Endothelial cell of umbilical vein (primary cell): ENCODE measurements at regions of chr10 and their contacts with region 1.

Region 1: DNA sequence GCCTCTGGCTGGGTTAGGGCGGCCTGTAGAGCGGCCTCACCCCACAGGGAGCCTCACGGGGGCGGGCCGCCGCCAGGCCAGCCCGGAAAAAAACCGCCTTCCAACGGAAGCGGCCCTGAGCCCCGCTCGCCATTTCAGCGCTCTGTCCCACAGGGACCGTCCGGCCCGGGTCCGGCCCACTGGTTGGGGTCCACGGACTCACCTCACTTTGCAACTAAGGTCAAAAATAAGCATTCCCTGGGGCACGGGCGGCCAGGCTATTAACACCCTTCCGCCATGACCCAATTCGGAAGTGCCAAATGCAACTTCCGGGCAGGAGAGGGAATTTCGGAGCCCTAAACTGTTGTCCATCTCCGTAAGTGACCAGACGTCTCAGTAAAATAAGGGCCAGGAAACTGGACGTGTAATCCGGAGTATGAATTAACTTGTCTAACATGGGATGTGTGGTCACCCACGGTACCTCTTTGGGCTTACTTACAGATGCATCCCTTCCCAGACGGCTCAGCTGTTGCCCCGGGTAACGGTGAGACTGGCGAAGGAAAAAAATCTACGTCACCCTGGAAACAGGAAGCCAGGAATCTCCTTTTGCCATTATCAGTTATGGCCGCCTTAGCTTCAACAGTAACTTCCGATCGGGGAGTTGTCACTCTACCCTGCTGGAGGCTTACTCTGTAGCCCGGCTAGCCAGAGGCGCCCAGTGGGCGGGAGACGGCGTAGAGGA is at the start of gene BBIP1:
- DNase-seq: peak; percentile 100
- H3K4me3 ChIP-seq: peak within 1 kb of the TSS; percentile 89 to 94 (median 93)
- H3K27ac ChIP-seq: peak within 1 kb of the TSS; percentile 98
- H3K4me1 ChIP-seq: peaks cover 20% of the 10 kb centered on the region
- H3K27me3 ChIP-seq: no peaks in the 10 kb centered on the region
- CTCF ChIP-seq: no peak
- POLR2A ChIP-seq: peak; percentile 91
- total RNA-seq, gene BBIP1: 32.8 and 34.9 TPM in 2 replicates

Region 2: DNA sequence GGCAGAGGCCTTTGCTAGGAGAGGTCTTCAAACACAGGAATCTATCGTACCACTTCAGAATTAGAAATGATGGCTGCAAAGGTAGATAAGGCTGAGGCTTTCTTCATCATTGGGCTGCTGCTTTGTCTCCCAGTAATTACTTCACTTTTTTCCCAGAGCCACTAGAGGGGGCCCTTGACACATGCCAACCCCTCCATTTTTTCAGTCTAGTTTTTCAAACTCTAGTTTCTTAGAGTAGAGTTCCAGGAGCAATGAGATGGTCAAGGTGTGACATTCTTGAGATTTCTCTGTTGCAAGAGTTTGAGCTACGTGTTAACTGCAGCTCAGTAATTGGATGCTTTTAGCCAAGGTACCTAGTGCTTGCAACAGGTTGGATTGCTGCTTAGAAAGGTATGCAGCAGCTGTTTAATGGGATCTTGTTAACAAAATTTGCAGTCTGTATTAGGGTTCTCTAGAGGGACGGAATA is 308.5 kb before region 1 on chr10:
- CTCF ChIA-PET with region 1: interaction called, 3 read pairs
- POLR2A ChIA-PET with region 1: no interaction called
- dilution Hi-C with region 1: no loop called
- intact Hi-C with region 1: loop called (anchors 1 kb)
- DNase-seq: peak; percentile 58
- H3K4me3 ChIP-seq: no peak overlapping the region
- H3K27ac ChIP-seq: no peak overlapping the region
- H3K4me1 ChIP-seq: no peaks in the 10 kb centered on the region
- H3K27me3 ChIP-seq: peaks cover 6 to 10% of the 10 kb centered on the region in 2 experiments
- CTCF ChIP-seq: peak; percentile 68 to 71
- POLR2A ChIP-seq: no peak

Region 3: GRCh38 chr10:110758898-110759297 is 159.9 kb before region 1 on chr10:
- CTCF ChIA-PET with region 1: interaction called, 3 read pairs
- POLR2A ChIA-PET with region 1: no interaction called
- dilution Hi-C with region 1: no loop called
- intact Hi-C with region 1: loop called (anchors 1 kb)
- DNase-seq: peak; percentile 89
- H3K4me3 ChIP-seq: no peak overlapping the region
- H3K27ac ChIP-seq: peak overlapping the region; percentile 64
- H3K4me1 ChIP-seq: peaks cover 18% of the 10 kb centered on the region
- H3K27me3 ChIP-seq: peaks cover 0 to 8% of the 10 kb centered on the region in 2 experiments
- CTCF ChIP-seq: no peak
- POLR2A ChIP-seq: peak; percentile 72

Region 4: DNA sequence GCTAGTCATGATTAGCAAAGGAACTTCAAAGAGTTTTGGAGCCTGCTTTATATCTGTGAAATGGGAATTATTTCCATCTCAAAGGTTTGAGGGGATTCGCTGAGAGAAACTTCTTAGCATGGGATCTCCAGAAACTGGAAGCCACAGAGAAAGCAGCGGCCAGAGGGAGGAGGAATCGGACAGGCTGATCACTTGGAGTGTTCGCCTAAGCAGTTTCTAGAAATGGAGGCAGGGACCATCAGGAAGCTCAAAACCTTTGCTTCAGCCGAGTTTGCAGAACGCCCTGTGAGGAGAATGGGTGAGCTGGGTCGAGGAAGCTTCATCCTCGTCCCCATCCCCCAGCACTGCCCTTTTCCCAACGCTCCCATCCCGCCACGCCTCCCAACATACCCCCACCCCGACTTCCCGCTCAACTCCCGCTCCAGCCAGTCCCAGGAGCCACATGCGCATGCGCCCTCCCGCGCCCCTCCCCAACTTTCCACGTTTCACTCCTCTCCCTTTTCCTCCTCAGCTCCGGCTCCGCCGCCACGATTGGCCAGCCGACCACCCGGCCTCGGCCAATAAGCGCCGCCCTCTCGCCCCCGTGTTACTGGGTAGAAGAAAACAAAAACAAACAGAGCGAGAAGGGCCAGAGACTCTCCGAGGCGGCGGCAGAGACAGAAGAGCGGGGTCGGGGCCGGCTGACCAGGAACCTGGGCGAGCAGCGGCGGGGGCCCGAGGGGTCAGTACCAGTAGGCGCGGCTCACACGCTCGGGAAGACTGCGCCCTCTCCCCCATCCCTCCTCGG is 47.3 kb before region 1 on chr10 and contains the start of gene PDCD4:
- CTCF ChIA-PET with region 1: interaction called, 4 read pairs
- POLR2A ChIA-PET with region 1: interaction called, 7 read pairs
- dilution Hi-C with region 1: no loop called
- intact Hi-C with region 1: loop called (anchors 1 kb)
- DNase-seq: peak; percentile 99
- H3K4me3 ChIP-seq: peak within 1 kb of the TSS; percentile 55 to 96 (median 85)
- H3K27ac ChIP-seq: peak within 1 kb of the TSS; percentile 57
- H3K4me1 ChIP-seq: peaks cover 21% of the 10 kb centered on the region
- H3K27me3 ChIP-seq: peaks cover 5 to 7% of the 10 kb centered on the region in 2 experiments
- CTCF ChIP-seq: no peak
- POLR2A ChIP-seq: peak; percentile 80
- total RNA-seq, gene PDCD4: 46.1 and 47.9 TPM in 2 replicates

Region 5: DNA sequence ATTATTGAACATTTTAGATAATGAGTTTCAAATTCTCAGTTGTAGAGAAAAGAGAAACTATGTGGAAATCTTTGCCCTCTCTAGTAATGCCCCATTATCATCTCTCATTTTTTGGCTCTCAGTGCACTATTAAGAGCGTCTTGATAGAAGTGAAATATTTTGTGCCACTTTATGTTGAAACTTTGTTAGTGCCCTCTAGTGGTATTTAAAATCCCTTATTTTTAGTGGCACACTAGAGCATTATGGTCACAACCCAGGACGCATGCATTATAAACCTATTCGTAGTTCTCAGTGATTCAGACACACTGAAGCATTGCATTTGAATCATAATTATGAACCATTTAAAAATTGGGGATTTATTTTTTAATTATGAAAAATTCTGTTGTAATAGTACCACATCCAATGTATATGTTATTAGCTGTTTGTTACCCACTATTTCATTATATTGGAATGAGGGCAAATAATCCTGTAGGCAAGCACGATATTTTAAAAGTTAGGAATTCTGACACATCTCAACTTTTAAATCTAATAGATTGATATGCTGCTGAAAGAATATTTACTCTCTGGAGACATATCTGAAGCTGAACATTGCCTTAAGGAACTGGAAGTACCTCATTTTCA is 25.1 kb before region 1 on chr10:
- CTCF ChIA-PET with region 1: interaction called, 9 read pairs
- POLR2A ChIA-PET with region 1: no interaction called
- dilution Hi-C with region 1: no loop called
- intact Hi-C with region 1: loop called (anchors 1 kb)
- DNase-seq: peak; percentile 62
- H3K4me3 ChIP-seq: no peak overlapping the region
- H3K27ac ChIP-seq: no peak overlapping the region
- H3K4me1 ChIP-seq: no peaks in the 10 kb centered on the region
- H3K27me3 ChIP-seq: no peaks in the 10 kb centered on the region
- CTCF ChIP-seq: peak; percentile 17 to 29
- POLR2A ChIP-seq: no peak

Region 6: GRCh38 chr10:111076191-111076681 is 157.4 kb after region 1 on chr10:
- CTCF ChIA-PET with region 1: interaction called, 3 read pairs
- POLR2A ChIA-PET with region 1: interaction called, 4 read pairs
- dilution Hi-C with region 1: no loop called
- intact Hi-C with region 1: loop called (anchors 2 kb)
- DNase-seq: peak; percentile 41
- H3K4me3 ChIP-seq: peak overlapping the region; percentile 23 to 50 (median 29)
- H3K27ac ChIP-seq: no peak overlapping the region
- H3K4me1 ChIP-seq: peaks cover 17% of the 10 kb centered on the region
- H3K27me3 ChIP-seq: peaks cover 40 to 71% of the 10 kb centered on the region in 2 experiments
- CTCF ChIP-seq: peak; percentile 68 to 92
- POLR2A ChIP-seq: no peak

Region 7: DNA sequence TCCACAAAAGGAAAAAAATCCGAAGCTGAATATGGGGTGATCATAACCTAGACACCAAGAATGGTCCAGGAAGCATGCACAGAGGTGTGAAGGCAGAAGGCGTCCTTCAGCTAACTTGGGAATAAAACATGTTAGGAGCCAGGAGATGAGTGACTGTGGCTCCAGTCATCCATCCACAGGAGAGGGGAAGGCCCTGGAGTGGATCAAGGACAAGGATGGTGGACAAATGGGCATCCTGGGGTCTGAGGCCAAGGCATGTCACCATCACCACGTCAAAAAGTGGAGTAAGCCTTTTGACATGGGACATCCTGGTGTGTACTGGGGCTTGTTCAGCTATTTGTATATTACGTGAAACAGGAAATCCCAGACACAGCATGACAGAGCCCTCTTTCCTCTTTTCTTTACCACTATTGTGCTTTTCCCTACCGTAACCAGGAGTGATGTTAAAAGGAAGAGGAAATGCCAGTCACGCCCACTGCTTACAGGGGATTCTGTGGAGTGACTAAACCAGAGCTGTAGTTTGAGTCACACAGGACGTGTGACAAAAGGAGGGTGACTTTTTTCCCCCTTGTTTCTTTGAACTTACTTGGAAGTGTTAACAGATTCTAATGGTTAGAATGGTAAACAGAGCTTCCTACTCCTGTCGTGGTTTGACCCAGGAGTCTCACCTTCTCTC is 1470.5 kb after region 1 on chr10:
- CTCF ChIA-PET with region 1: no interaction called
- POLR2A ChIA-PET with region 1: interaction called, 7 read pairs
- dilution Hi-C with region 1: no loop called
- intact Hi-C with region 1: loop called (anchors 2 kb)
- DNase-seq: peak; percentile 85
- H3K4me3 ChIP-seq: no peak overlapping the region
- H3K27ac ChIP-seq: peak overlapping the region; percentile 85
- H3K4me1 ChIP-seq: peaks cover 18% of the 10 kb centered on the region
- H3K27me3 ChIP-seq: peaks cover 2 to 4% of the 10 kb centered on the region in 2 experiments
- CTCF ChIP-seq: no peak
- POLR2A ChIP-seq: no peak